GM10248 (cell line): ENCODE measurements at regions of chr11 and their contacts with region 1.

Region 1: GRCh38 chr11:45771566-45772448 is 33.1 kb upstream of the SLC35C1 start:
- DNase-seq: peak; percentile 94
- CTCF ChIP-seq: peak; percentile 91

Region 2: DNA sequence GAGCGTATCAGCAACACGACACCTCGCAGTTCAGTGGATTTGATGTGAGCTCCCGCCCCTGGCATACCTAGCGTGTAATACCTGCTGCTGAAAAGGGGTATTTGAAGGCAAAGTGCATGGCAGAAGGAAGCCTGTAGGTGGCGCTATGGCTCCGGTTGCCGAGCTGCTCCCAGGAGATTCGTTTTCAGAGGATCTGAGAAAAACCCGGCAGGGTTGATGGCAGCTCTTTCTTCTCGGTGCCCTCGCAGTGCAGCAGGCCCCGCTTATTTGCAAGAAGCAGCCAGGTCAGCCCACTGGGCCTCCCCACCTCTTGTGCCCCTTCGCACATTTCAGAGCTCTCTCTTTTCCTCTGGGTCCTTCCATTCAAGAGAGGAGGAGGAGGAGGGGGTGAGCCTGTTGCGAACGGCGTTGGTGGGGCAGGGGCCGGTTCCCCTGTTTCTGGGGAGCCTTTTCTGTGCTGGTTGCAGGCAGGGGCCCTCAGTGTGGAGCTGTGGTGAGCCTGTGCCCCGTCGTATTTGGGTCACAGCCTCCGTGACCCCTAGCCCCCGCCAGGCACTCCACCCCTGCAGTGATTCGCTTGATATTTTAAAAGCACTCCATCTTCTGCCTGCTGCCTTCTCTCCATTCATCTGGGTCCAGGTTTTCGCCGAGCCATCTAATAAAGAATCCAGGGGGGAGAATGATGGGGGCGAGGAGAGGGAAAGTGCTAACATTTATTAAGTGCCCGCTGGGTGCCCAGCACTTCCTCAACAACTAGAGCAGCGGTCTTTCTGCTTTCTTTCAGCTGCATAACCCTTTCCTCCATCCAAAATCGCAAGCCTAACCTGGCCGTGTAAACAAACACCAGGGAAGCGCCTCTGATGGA is 400.3 kb before region 1 on chr11:
- CTCF ChIA-PET with region 1: interaction called, 34 read pairs
- POLR2A ChIA-PET with region 1: no interaction called
- DNase-seq: peak; percentile 76
- CTCF ChIP-seq: peak; percentile 79

Region 3: DNA sequence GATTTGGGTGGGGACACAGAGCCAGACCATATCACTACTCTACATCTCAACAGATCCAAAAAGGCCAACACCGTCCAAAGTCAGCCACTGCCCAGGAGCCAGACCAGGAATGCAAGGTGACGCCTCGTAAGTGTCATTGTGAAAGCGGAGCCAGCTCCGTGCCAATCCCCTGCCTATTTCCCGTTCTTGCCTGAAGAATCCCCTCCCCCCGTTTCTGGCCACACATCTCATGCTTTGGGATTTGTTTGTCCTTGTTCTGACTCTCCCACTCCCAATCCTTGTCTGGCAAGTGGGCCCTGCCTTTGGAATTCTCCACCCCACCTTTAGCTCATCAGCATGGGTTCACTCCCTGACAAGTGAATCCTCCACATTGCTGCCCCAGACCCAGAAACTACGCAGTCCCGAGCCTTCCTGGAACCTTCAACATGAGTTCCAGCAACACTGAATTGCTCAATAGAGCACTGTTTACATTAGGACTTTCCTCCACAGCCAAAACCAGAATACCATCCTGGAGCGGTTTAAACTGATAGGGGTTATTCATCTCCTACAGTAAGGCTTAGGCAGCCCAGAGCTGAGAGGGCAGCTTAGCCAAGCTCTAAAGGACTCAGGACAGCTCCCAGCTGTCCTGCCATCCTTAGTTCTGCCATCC is 27.1 kb after region 1 on chr11:
- CTCF ChIA-PET with region 1: interaction called, 23 read pairs
- POLR2A ChIA-PET with region 1: no interaction called
- DNase-seq: no peak
- CTCF ChIP-seq: no peak

Region 4: GRCh38 chr11:45846974-45847910 is 75.4 kb after region 1 on chr11 and contains the start of gene CRY2:
- CTCF ChIA-PET with region 1: interaction called, 21 read pairs
- POLR2A ChIA-PET with region 1: no interaction called
- DNase-seq: peak; percentile 99
- CTCF ChIP-seq: no peak

Region 5: GRCh38 chr11:45964911-45965389 is 193.1 kb after region 1 on chr11:
- CTCF ChIA-PET with region 1: no interaction called
- POLR2A ChIA-PET with region 1: no interaction called
- DNase-seq: peak; percentile 77
- CTCF ChIP-seq: peak; percentile 91

Region 6: GRCh38 chr11:45982656-45983470 is 211.1 kb after region 1 on chr11:
- CTCF ChIA-PET with region 1: no interaction called
- POLR2A ChIA-PET with region 1: no interaction called
- DNase-seq: no peak
- CTCF ChIP-seq: no peak

Region 7: GRCh38 chr11:46026606-46027293 is 254.9 kb after region 1 on chr11:
- CTCF ChIA-PET with region 1: no interaction called
- POLR2A ChIA-PET with region 1: no interaction called
- DNase-seq: no peak
- CTCF ChIP-seq: no peak